Pancreas (tissue), 10 donors: ENCODE measurements at regions of chr1 and their contacts with region 1.

Region 1: GRCh38 chr1:168342572-168343280 is 62.0 kb downstream of the TBX19 start:
- DNase-seq: peak; percentile 66 to 85 (median 76)
- ATAC-seq: peak; percentile 93 to 99 (median 99)
- H3K4me3 ChIP-seq: peak overlapping the region in 1 of 4 donors; percentile 15
- H3K27ac ChIP-seq: no peak overlapping the region
- H3K4me1 ChIP-seq: peaks cover 0 to 2% (median 0%) of the 10 kb centered on the region in 3 donors
- H3K27me3 ChIP-seq: no peaks in the 10 kb centered on the region
- CTCF ChIP-seq: peak; percentile 59 to 81 (median 72)

Region 2: GRCh38 chr1:168202941-168203654 is 139.6 kb before region 1 on chr1:
- intact Hi-C with region 1: no loop called
- DNase-seq: no peak
- ATAC-seq: peak in 1 of 4 donors; percentile 38
- H3K4me3 ChIP-seq: no peak overlapping the region
- H3K27ac ChIP-seq: no peak overlapping the region
- H3K4me1 ChIP-seq: no peaks in the 10 kb centered on the region
- H3K27me3 ChIP-seq: no peaks in the 10 kb centered on the region
- CTCF ChIP-seq: no peak

Region 3: DNA sequence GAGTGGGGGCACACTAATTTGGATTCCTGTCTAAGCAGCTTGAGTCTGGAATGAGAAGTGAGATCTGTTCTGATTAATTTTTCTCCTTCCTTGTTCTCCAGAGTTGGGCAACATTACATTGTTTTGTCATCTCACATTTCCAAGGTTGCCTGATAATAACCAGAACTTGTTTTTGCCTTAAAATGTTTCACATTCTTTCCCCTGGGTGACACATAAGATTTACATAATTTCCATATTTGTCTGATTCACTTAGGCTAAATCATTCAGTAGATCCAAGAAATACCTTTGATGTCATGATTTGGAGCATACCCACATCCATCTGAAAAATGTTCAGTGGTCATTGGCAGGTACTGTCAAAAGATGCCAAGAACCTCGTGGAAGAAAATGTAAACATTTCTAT is 140.8 kb after region 1 on chr1:
- intact Hi-C with region 1: no loop called
- DNase-seq: no peak
- ATAC-seq: peak; percentile 70 to 86 (median 80)
- H3K4me3 ChIP-seq: no peak overlapping the region
- H3K27ac ChIP-seq: peak overlapping the region in 3 of 4 donors; percentile 36 to 58 (median 57)
- H3K4me1 ChIP-seq: peaks cover 7 to 23% (median 18%) of the 10 kb centered on the region in 3 donors
- H3K27me3 ChIP-seq: no peaks in the 10 kb centered on the region
- CTCF ChIP-seq: no peak

Region 4: DNA sequence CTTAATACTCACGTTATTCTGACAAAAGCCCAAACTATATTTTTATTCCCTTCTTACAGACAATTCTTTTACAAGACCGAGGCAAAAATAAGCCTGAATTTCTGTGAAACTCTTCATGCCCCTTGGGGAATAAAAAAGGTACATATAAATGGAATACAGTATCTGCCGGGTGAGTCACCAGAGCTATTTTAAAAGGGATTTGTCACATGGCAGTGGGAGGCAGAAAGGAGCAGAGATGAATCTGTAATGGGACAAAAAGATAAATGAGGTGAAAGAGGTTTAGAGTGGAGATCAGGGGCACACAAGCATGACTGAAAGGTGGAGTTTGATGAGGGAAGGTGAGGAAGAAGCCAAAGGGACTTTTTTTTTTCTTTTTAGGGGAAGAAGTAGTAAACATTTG is 242.5 kb after region 1 on chr1:
- intact Hi-C with region 1: loop called in 1 of 3 experiments (anchors 10 kb)
- DNase-seq: no peak
- ATAC-seq: no peak
- H3K4me3 ChIP-seq: no peak overlapping the region
- H3K27ac ChIP-seq: no peak overlapping the region
- H3K4me1 ChIP-seq: no peaks in the 10 kb centered on the region
- H3K27me3 ChIP-seq: no peaks in the 10 kb centered on the region
- CTCF ChIP-seq: no peak